Left cardiac atrium (tissue), 4 donors: ENCODE measurements at regions of chr18 and their contacts with region 1.

Region 1: DNA sequence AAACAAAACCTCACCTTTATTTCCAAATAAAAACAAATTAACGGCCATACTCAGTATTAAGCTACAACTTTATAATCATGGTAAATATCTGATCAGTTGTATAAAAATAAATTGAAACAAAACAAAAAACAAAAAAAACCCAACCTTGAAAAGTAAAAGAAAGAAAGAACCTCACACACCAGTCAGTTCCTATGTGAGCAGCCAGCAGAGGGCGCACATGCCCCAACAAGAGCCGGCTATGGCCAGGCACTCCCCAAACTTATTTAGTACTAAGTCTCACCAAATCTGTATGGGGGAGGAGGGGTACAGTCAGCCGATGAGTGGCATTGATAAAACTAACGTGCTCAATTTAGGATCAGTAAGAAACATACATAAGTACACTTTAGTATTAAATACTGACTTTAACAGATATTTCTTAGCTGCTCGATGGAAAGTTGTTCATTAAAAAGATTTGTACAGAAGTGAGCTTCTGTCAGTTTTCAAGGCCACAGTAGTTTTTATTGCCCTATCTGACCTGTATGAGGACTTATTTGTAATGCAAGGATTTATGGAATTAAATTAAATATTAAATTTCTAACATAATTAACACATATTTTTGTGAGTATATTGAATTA is 172.6 kb downstream of the TCF4 start:
- DNase-seq: peak; percentile 93
- ATAC-seq: peak; percentile 93 to 95

Region 2: DNA sequence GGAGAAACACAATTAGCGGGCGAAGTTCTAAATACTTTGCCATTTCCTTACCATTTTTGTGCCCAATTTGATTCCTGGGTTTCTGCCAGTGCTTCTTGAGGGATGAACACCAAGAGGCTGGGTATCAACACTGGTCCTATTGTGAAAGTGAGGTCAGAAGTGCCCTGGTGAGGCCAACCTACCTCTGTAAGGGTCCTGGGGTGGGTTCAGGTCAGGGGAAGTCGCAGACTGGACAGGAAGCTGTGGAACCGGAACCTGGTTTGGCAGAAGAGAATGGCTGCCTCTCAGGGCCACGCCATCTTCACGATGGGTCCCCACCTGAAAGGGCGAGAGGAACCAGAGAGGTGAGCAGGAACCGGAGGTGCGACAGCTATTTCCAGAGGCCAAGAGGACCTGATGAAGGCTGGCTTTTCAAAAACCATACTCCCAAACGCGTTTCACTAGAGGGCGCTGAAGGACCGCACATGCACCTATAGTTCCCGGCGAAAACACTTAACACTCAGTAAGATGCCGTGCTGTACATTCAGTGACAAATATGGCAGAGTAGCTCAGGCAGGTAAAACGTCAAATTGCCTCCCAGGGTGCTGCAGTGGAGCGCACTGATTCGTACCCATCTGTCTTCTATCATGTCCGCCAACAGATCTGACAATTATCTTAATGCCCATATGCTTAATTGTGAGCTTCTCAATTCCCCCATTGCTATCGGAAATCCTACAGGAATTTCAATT is 180.8 kb before region 1 on chr18:
- intact Hi-C with region 1: loop called in 1 of 2 experiments (anchors 5 kb)
- DNase-seq: peak; percentile 83
- ATAC-seq: peak; percentile 91 to 93

Region 3: DNA sequence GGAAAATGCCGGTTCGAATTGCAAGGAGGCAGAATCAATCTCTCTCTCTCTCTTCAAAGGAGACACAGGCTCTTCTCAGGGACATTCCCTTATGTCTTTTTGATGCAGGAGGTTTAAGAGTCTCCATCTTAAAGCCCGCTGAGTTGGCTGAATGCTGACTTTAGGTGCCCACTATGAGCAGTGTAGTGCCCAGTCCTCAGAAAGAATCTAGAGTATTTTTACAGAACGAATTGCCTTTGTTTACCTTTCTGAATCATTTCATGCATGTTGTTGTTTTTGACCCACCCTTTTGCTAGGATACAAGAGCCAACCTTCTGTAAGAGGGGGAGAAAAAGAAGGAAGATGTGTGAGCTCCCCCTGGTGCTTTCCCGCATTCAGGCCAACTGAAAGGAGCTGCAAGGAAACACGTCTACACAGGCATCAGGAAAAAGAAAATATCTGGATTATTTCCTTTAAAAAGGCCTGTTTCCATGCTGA is 366.2 kb after region 1 on chr18:
- intact Hi-C with region 1: loop called in 1 of 2 experiments (anchors 5 kb)
- DNase-seq: peak; percentile 52
- ATAC-seq: peak; percentile 39 to 54

Region 4: DNA sequence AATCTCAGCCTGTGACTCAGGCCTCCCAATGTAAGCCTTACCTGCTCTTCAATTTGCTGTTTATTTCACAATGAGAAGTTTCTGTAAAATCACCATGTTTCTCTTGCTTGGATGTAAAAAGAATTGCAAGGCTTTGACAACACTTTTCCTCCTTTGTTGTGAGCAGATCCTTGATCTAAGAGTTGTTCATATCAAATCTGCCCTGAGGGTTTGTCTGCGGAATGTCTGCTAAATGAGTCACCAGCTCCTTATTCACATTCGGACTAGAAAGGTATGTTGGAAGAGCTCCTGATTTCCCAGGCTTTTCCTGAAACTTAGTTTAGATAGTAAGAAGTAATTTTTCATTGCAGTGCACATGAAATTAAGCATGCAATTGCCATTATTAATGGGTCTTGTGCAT is 440.9 kb after region 1 on chr18:
- intact Hi-C with region 1: loop called in 1 of 2 experiments (anchors 10 kb)
- DNase-seq: no peak
- ATAC-seq: peak in 1 of 2 donors; percentile 64